Thyroid gland (tissue), 4 donors: ENCODE measurements at regions of chr4 and their contacts with region 1.

Region 1: DNA sequence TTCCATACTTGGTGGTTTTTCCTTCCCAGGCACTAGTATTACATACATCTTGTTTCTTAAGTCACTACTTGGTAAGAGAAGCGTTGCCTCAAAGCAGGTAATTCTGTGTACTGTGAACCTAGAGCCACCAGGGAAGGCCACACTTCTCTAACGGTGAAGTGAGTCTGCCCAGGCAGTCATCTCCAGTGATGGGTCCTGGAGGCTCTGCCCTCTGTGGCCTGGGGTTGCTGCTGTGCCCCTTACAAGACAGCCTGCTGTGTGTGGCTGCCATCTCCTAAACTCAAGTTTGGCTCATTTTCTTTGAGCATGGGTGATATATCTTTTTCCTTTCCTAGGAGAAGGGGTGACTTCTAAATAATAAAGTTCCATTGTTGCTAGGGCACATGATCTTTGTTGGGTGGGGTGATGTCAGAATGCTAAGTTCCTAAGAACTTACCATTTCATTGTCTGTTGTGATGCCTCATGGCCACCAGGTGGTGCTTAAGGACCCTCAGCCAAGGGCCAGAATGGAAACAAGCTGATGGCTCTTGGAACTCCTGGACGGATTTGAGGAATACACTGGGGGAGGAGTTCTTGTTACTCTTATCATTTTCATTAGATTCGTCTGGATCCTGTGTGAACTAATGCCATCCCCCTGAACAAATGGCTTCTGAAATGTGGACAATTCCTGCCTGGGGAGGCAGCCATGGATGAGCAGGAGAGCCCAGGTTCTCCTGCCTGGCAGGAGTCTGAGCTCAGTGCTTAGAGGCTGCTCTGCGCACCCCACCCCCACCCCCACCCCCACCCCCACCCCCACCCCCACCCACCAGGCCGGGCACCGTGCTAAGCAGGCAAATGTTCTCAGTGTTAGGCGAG is 41.1 kb upstream of the WDR1 start:
- DNase-seq: peak; percentile 68
- H3K4me3 ChIP-seq: no peak overlapping the region
- H3K27ac ChIP-seq: no peak overlapping the region
- H3K4me1 ChIP-seq: peaks cover 9% of the 10 kb centered on the region in 2 donors
- H3K27me3 ChIP-seq: no peaks in the 10 kb centered on the region
- CTCF ChIP-seq: peak; percentile 43 to 91 (median 79)
- POLR2A ChIP-seq: no peak

Region 2: DNA sequence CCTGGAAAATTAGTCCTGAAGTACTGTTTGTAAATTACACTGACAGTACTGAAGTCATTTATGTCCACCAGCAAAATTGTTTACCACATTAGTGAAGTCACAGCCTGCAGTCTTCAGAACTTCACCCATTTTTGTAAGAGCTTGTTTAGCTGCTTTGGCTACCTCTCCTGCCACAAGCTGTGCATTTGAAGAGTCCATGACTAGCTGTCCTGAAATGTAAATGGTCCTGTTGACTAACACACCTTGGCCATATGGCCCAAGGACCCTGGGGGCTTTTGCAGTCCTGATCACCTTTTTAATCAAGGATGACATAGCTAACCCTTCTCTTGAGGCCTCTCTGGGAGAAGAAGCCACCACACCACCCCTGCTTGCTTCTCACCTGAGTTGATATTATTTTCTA is 320.9 kb after region 1 on chr4:
- intact Hi-C with region 1: no loop called
- DNase-seq: no peak
- H3K4me3 ChIP-seq: no peak overlapping the region
- H3K27ac ChIP-seq: no peak overlapping the region
- H3K4me1 ChIP-seq: no peaks in the 10 kb centered on the region
- H3K27me3 ChIP-seq: no peaks in the 10 kb centered on the region
- CTCF ChIP-seq: no peak
- POLR2A ChIP-seq: no peak

Region 3: DNA sequence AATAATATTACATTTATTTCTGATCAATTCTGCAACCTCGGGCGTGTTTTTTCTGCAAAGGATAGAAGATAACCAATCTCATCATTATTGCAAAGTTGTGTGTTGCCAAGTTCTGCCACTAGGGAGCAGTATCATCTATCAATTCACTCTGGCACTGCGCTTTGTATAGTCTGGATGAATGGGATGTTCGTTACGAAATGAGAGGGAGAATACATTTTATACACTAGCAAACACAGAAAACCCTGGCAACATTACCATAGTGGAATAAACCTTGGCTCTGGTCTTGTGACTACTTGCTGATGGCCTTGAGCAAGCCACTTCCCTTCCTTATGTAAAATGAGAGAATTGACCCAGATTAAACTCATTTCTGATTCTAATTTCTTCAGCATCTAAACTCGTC is 397.0 kb after region 1 on chr4:
- intact Hi-C with region 1: loop called (anchors 5 kb)
- DNase-seq: peak; percentile 43 to 47
- H3K4me3 ChIP-seq: no peak overlapping the region
- H3K27ac ChIP-seq: no peak overlapping the region
- H3K4me1 ChIP-seq: no peaks in the 10 kb centered on the region
- H3K27me3 ChIP-seq: no peaks in the 10 kb centered on the region
- CTCF ChIP-seq: peak; percentile 23 to 77 (median 68)
- POLR2A ChIP-seq: no peak